Right ventricle myocardium inferior (tissue), 1 donor: ENCODE measurements at regions of chr1 and their contacts with region 1.

Region 1: GRCh38 chr1:112466078-112466660 is 42.6 kb upstream of the WNT2B start:
- DNase-seq: peak; percentile 98
- ATAC-seq: peak; percentile 94

Region 2: DNA sequence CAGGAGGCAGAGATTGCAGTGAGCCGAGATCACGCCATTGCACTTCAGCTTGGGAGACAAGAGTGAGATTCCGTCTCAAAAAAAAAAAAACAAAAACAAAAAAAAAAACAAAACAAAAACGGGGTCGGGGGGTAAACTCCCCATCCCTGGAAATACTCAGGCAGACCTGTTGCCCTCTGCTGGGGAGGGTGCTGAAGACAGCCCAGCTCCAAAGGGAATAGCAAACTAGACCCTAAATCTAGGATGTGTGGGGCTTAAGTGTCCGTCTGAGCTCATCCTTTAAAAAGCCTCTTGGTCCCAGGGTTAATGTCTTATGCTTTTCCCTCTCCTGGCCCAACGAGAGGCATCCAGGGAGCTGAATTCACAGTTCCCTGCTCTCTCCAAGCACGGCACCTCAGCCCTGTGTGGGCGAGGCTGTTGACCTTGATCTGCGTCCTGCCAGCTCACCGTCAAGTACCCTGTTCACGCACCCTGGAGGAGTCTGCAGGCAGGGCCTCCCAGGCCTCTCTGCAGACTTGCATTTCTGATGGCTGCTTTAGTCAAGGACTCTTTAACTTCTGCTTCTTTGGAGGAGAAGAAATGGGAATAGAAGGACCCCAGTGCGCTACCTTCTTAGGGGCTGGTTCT is 499.0 kb before region 1 on chr1:
- intact Hi-C with region 1: no loop called
- DNase-seq: no peak
- ATAC-seq: peak; percentile 68

Region 3: GRCh38 chr1:112390775-112391602 is 75.2 kb before region 1 on chr1:
- intact Hi-C with region 1: loop called (anchors 1 kb)
- DNase-seq: peak; percentile 81
- ATAC-seq: peak; percentile 90

Region 4: DNA sequence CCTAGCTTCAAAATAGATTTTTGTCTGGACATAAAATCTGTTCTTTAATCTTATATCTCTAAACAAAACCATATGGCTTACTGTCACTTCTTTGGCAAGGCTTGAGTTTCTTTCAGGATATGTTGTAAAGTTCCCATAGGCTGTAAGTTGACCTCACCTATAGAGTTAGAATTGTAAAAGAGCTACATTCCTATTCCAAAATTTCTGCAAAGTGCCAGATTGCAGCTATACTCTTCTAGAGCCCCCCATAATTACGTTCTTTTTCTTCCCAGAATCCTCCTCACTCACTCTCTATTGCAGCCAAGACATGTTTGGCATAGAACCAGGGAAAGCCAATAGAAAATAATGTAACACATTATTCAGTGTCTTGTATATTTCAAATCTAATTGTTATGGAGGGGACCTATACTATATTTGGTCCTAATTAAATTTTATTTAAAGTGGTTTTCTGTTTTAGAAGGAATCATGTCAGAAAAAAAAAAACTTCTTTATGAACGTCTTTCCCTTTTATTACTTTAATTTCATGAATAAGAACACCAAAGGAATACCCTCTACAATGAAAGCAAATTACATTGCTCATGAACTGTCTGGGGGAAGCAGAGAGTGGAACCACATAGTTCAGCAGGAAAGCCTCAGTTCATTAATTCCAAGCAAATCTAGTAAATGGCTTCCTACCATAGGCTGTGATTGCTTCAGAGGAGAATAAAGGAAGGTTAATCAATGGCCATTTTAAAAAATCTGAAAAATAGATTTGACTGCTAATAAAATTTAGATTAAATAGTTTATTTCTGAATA is 47.9 kb before region 1 on chr1:
- intact Hi-C with region 1: no loop called
- DNase-seq: no peak
- ATAC-seq: no peak